CD8-positive, alpha-beta T cell (primary cell): ENCODE measurements at regions of chr20 and their contacts with region 1.

Region 1: GRCh38 chr20:44109951-44110361 is 77.0 kb downstream of the JPH2 start:
- DNase-seq: no peak
- ATAC-seq: no peak
- H3K4me3 ChIP-seq: no peak overlapping the region
- H3K4me3 Mint-ChIP-seq: no peak overlapping the region
- H3K27ac ChIP-seq: no peak overlapping the region
- H3K27ac Mint-ChIP-seq: no peak overlapping the region
- H3K4me1 ChIP-seq: no peaks in the 10 kb centered on the region
- H3K4me1 Mint-ChIP-seq: no peaks in the 10 kb centered on the region
- H3K27me3 ChIP-seq: no peaks in the 10 kb centered on the region
- H3K27me3 Mint-ChIP-seq: peaks cover 58% of the 10 kb centered on the region
- CTCF ChIP-seq: no peak

Region 2: GRCh38 chr20:44089987-44090674 is 19.8 kb before region 1 on chr20:
- CTCF ChIA-PET with region 1: no interaction called
- POLR2A ChIA-PET with region 1: no interaction called
- intact Hi-C with region 1: no loop called
- DNase-seq: peak in 1 of 9 experiments; percentile 37
- ATAC-seq: no peak
- H3K4me3 ChIP-seq: no peak overlapping the region
- H3K4me3 Mint-ChIP-seq: no peak overlapping the region
- H3K27ac ChIP-seq: no peak overlapping the region
- H3K27ac Mint-ChIP-seq: no peak overlapping the region
- H3K4me1 ChIP-seq: no peaks in the 10 kb centered on the region
- H3K4me1 Mint-ChIP-seq: no peaks in the 10 kb centered on the region
- H3K27me3 ChIP-seq: no peaks in the 10 kb centered on the region
- H3K27me3 Mint-ChIP-seq: peaks cover 17% of the 10 kb centered on the region
- CTCF ChIP-seq: no peak

Region 3: DNA sequence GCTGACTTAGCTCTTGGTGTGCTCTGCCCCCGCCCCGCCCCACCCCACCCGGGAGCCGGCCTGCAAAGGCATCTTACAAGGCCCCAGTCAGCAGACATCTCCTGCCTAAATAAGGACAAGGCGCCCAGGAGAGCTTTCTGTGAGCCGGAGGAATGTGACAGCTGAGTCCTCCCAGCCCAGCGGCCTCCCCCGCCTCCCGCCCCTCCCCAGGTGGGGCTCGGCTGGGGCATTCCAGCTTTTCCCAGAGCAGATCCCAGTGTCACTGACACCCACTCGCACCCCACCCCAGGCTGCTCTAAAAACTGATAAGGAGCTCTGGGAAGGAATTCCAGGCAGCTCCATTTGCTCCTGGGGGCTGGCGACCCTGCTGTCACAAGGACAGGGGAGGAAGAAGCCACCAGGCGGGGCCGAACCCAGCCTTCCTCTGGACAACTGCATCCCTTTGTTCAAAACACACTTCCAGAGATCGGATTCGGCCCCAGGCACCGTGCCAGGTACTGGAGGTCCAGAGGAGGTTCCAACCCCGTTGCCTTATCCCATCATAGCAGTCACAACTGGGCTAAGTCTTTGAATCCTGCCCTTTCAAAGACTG is 27.4 kb after region 1 on chr20:
- CTCF ChIA-PET with region 1: no interaction called
- POLR2A ChIA-PET with region 1: no interaction called
- intact Hi-C with region 1: no loop called
- DNase-seq: no peak
- ATAC-seq: no peak
- H3K4me3 ChIP-seq: no peak overlapping the region
- H3K4me3 Mint-ChIP-seq: no peak overlapping the region
- H3K27ac ChIP-seq: no peak overlapping the region
- H3K27ac Mint-ChIP-seq: no peak overlapping the region
- H3K4me1 ChIP-seq: no peaks in the 10 kb centered on the region
- H3K4me1 Mint-ChIP-seq: no peaks in the 10 kb centered on the region
- H3K27me3 ChIP-seq: no peaks in the 10 kb centered on the region
- H3K27me3 Mint-ChIP-seq: peaks cover 24% of the 10 kb centered on the region
- CTCF ChIP-seq: no peak

Region 4: DNA sequence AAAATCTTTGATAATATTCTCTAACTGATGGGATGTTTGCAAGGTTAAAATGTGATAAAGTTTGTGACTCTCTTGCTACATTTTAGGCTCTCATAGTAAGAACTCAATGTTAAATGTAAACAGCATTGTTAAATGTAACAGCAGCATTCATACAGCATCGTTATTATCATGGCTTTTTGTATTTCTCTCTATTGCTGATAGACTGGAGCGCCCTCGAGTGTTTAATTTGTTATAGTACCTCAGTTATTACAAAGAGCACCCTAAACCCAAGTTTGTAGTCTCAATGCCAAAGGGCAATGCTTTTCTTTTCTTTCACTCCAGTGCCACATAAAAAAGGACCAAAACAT is 350.8 kb after region 1 on chr20:
- CTCF ChIA-PET with region 1: no interaction called
- POLR2A ChIA-PET with region 1: no interaction called
- intact Hi-C with region 1: loop called in 1 of 2 experiments (anchors 10 kb)
- DNase-seq: peak in 2 of 9 experiments; percentile 24 to 36
- ATAC-seq: no peak
- H3K4me3 ChIP-seq: no peak overlapping the region
- H3K4me3 Mint-ChIP-seq: no peak overlapping the region
- H3K27ac ChIP-seq: no peak overlapping the region
- H3K27ac Mint-ChIP-seq: no peak overlapping the region
- H3K4me1 ChIP-seq: no peaks in the 10 kb centered on the region
- H3K4me1 Mint-ChIP-seq: no peaks in the 10 kb centered on the region
- H3K27me3 ChIP-seq: no peaks in the 10 kb centered on the region
- H3K27me3 Mint-ChIP-seq: no peaks in the 10 kb centered on the region
- CTCF ChIP-seq: peak; percentile 41